IMR-90 (cell line): ENCODE measurements at regions of chr20 and their contacts with region 1.

Region 1: DNA sequence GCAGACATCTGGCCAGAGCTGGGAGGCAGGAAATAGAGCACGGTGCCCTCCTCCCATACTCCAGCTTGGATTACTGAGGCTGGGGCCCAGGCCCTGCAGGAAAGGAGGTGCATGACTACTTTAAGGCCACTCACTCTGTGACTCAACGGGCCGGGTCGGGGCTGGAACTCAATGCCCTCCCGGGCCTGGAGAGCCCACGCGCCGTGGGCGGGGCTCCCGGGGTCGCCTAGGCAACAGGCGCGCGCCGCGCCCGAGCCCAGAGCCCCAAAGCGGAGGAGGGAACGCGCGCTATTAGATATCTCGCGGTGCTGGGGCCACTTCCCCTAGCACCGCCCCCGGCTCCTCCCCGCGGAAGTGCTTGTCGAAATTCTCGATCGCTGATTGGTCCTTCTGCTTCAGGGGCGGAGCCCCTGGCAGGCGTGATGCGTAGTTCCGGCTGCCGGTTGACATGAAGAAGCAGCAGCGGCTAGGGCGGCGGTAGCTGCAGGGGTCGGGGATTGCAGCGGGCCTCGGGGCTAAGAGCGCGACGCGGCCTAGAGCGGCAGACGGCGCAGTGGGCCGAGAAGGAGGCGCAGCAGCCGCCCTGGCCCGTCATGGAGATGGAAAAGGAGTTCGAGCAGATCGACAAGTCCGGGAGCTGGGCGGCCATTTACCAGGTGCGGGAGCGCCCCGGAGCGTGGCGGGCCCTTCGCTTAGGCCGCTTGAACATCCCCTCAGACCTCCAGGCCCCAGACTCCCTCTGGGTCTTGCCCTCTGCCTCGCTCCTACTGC is at the start of gene PTPN1:
- DNase-seq: peak; percentile 99
- ATAC-seq: peak; percentile 96
- H3K4me3 ChIP-seq: peak within 1 kb of the TSS; percentile 72
- H3K27ac ChIP-seq: peak within 1 kb of the TSS; percentile 72
- H3K4me1 ChIP-seq: peaks cover 13% of the 10 kb centered on the region
- H3K27me3 ChIP-seq: no peaks in the 10 kb centered on the region
- CTCF ChIP-seq: 0 out of 2 replicates have a peak, but pooled peaks have one; percentile 13
- POLR2A ChIP-seq: peak; percentile 99
- RAD21 ChIP-seq: peak; percentile 32
- total RNA-seq, gene PTPN1: 31.7 and 38.0 TPM in 2 replicates

Region 2: GRCh38 chr20:50561379-50562078 is 51.4 kb after region 1 on chr20:
- CTCF ChIA-PET with region 1: no interaction called
- POLR2A ChIA-PET with region 1: no interaction called
- dilution Hi-C with region 1: no loop called
- in situ Hi-C with region 1: no loop called
- intact Hi-C with region 1: loop called (anchors 2 kb)
- DNase-seq: peak; percentile 99
- ATAC-seq: peak; percentile 90
- H3K4me3 ChIP-seq: no peak overlapping the region
- H3K27ac ChIP-seq: peak overlapping the region; percentile 87
- H3K4me1 ChIP-seq: peaks cover 36% of the 10 kb centered on the region
- H3K27me3 ChIP-seq: no peaks in the 10 kb centered on the region
- CTCF ChIP-seq: no peak
- POLR2A ChIP-seq: no peak; the same call in 1 of the 2 replicates
- RAD21 ChIP-seq: peak; percentile 8; the same call in 1 of the 2 replicates

Region 3: DNA sequence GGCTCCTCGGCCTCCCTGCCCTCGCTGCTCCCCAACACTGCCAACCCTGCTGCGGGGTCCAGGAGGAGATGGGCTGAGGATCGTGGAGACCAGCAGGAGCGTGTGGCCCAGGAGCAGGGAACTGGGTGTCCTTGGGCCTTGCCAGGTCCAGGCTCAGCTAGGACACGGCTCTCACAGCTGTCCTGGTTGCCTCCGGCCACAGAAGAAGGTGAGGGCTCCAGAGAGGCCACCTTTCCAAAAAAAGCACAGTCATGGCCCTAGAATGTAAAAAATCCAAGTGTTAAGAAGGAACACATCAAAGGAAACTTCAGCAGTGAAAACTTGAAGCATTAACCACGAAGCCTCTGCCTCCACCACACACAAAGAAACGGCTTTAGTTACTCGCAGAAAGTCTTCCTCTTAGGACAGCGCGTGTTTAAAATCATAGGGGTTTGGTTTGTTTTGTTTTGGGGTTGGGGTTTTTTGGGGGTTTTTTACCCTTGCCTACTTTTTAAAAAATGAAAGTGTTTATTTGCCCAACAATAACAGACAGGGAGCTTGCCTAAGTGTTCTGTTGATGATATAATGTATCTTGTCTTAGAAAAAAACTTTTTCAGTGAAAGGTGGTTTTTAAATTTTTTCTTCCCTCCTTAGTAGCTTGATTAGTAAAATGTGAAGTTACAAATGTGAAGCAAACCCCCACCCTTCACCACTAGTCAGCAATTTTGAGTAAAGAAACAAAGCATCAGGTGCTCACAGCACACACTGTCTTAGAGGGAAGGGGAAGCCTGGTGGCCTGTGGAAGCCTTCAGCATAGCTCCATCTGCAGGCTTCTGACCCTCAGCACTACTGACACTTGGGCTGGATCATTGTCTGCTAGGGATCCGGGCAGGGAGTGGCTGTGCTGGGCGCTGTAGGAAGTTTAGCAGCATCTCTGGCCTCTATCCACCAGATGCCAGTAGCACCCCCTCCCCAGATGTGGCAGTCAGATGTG is 60.0 kb after region 1 on chr20:
- CTCF ChIA-PET with region 1: interaction called, 6 read pairs
- POLR2A ChIA-PET with region 1: interaction called, 3 read pairs
- dilution Hi-C with region 1: no loop called
- in situ Hi-C with region 1: loop called (anchors 5 kb)
- intact Hi-C with region 1: loop called (anchors 1 kb)
- DNase-seq: peak; percentile 37
- ATAC-seq: peak; percentile 53
- H3K4me3 ChIP-seq: no peak overlapping the region
- H3K27ac ChIP-seq: peak overlapping the region; percentile 56; the same call in 1 of the 2 replicates
- H3K4me1 ChIP-seq: peaks cover 18% of the 10 kb centered on the region
- H3K27me3 ChIP-seq: no peaks in the 10 kb centered on the region
- CTCF ChIP-seq: peak; percentile 52
- POLR2A ChIP-seq: no peak
- RAD21 ChIP-seq: peak; percentile 65